Heart left ventricle (tissue), 16 donors: ENCODE measurements at regions of chr2 and their contacts with region 1.

Region 1: DNA sequence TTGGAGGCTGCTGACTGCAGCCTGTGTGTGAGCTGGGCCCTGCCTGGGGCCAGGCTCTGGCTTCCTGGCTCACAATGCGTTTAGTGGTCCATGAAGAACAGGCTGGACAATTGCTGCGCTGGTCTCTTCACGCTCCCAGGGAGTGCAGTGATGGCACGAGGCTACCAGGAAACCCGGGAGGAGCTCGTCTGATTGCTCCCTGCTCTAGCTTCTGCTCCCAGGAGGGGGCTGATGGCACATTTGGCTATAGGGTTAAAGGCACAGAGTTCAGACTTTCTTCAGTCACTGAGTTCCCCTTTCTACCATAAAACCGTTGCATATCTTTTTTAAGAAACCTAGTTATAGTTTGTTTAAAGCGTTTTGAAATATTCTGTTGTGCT is 60.1 kb downstream of the KCNF1 start:
- DNase-seq: no peak
- ATAC-seq: no peak
- H3K4me3 ChIP-seq: no peak overlapping the region
- H3K27ac ChIP-seq: no peak overlapping the region
- H3K4me1 ChIP-seq: peaks cover 0 to 1% (median 0%) of the 10 kb centered on the region in 12 donors
- H3K27me3 ChIP-seq: peaks cover 0 to 20% (median 0%) of the 10 kb centered on the region in 9 donors
- CTCF ChIP-seq: no peak
- POLR2A ChIP-seq: no peak

Region 2: DNA sequence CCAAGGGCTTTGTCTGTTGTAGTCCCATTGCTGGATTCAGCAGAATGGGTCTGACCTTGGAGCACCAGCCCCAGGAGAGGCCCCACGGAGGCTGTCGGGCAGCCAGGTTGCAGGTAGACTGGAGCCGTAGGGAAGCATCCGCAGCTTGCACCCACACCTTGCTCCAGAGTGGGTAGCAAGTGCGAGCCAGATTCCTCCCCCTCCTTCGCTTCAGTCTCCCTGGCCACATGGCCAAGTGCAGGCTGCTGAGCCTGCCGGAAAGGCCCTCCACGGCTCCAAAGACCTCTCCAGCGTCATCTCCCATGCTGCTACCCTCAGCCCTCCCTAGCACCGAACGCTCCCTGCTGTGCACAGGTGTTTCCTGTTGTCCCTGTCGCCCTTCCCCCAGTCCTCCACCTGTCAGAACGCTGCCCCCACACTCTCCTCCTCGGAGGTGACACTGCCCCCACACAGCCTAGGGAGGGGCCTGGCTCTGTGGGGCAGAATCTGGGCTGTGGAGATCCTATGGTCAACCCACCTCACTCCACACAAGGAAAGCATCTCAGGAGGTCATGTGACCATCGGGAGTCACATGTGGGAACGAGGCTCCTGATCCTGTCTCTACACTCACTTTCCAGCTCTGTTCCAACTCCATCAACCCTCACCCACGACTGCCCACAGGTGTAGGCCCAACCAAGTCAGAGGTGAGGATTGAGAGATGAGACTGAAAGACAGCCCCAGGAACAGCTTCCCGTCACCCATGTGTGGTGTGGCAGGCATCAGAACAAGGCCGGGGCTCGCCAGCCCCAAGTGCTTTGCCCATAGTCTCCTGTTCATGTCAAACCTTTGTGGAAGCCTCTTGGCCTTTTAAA is 51.9 kb before region 1 on chr2:
- intact Hi-C with region 1: loop called in 1 of 10 experiments (anchors 5 kb)
- DNase-seq: no peak
- ATAC-seq: no peak
- H3K4me3 ChIP-seq: no peak overlapping the region
- H3K27ac ChIP-seq: no peak overlapping the region
- H3K4me1 ChIP-seq: peaks cover 0 to 10% (median 0%) of the 10 kb centered on the region in 12 donors
- H3K27me3 ChIP-seq: peaks cover 0 to 8% (median 0%) of the 10 kb centered on the region in 9 donors
- CTCF ChIP-seq: no peak
- POLR2A ChIP-seq: no peak